Endothelial cell of umbilical vein (primary cell): ENCODE measurements at regions of chr1 and their contacts with region 1.

Region 1: GRCh38 chr1:94481473-94481933 is 60.1 kb downstream of the F3 start:
- DNase-seq: peak; percentile 67
- H3K4me3 ChIP-seq: no peak overlapping the region
- H3K27ac ChIP-seq: no peak overlapping the region
- H3K4me1 ChIP-seq: no peaks in the 10 kb centered on the region
- H3K27me3 ChIP-seq: no peaks in the 10 kb centered on the region
- CTCF ChIP-seq: peak; percentile 83 to 86
- POLR2A ChIP-seq: no peak

Region 2: GRCh38 chr1:94025383-94026340 is 455.8 kb before region 1 on chr1:
- CTCF ChIA-PET with region 1: interaction called, 11 read pairs
- POLR2A ChIA-PET with region 1: no interaction called
- dilution Hi-C with region 1: no loop called
- intact Hi-C with region 1: no loop called
- DNase-seq: peak; percentile 83
- H3K4me3 ChIP-seq: no peak overlapping the region
- H3K27ac ChIP-seq: no peak overlapping the region
- H3K4me1 ChIP-seq: peaks cover 25% of the 10 kb centered on the region
- H3K27me3 ChIP-seq: no peaks in the 10 kb centered on the region
- CTCF ChIP-seq: peak; percentile 53 to 73
- POLR2A ChIP-seq: no peak

Region 3: DNA sequence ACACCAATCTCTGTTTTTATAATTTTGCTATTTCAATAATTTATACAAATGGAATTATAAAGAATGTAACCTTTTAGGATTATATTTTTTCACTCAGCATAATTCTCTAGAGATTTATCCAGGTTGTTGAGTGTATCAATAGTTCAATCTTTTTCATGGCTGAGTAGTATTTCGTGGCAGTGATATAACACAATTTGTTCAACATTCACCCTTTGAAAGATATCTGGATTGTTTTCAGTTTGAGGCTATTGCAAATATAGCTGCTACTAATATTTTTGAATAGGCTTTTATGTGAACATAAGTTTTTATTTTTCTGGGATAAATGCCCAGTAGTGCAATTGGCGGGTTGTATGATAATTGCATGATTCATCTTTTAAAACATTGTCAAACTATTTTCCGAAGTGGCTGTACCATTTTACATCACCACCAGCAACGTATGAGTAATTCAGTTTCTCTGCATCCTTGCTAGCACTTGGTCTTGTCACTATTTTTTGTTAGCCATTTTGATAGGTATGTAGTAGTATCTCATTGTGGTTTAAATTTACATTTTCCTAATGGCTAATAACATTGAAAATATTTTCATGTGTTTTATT is 118.9 kb before region 1 on chr1:
- CTCF ChIA-PET with region 1: no interaction called
- POLR2A ChIA-PET with region 1: no interaction called
- dilution Hi-C with region 1: no loop called
- intact Hi-C with region 1: no loop called
- DNase-seq: no peak
- H3K4me3 ChIP-seq: no peak overlapping the region
- H3K27ac ChIP-seq: no peak overlapping the region
- H3K4me1 ChIP-seq: no peaks in the 10 kb centered on the region
- H3K27me3 ChIP-seq: peaks cover 12 to 15% of the 10 kb centered on the region in 2 experiments
- CTCF ChIP-seq: no peak
- POLR2A ChIP-seq: no peak

Region 4: GRCh38 chr1:94463765-94464330 is 17.7 kb before region 1 on chr1:
- CTCF ChIA-PET with region 1: interaction called, 12 read pairs
- POLR2A ChIA-PET with region 1: no interaction called
- dilution Hi-C with region 1: no loop called
- intact Hi-C with region 1: no loop called
- DNase-seq: peak; percentile 74
- H3K4me3 ChIP-seq: no peak overlapping the region
- H3K27ac ChIP-seq: no peak overlapping the region
- H3K4me1 ChIP-seq: no peaks in the 10 kb centered on the region
- H3K27me3 ChIP-seq: no peaks in the 10 kb centered on the region
- CTCF ChIP-seq: peak in 1 of 2 donors; percentile 47
- POLR2A ChIP-seq: no peak

Region 5: GRCh38 chr1:94471271-94471670 is 10.2 kb before region 1 on chr1:
- CTCF ChIA-PET with region 1: interaction called, 29 read pairs
- POLR2A ChIA-PET with region 1: no interaction called
- dilution Hi-C with region 1: no loop called
- intact Hi-C with region 1: no loop called
- DNase-seq: no peak
- H3K4me3 ChIP-seq: no peak overlapping the region
- H3K27ac ChIP-seq: no peak overlapping the region
- H3K4me1 ChIP-seq: no peaks in the 10 kb centered on the region
- H3K27me3 ChIP-seq: no peaks in the 10 kb centered on the region
- CTCF ChIP-seq: no peak
- POLR2A ChIP-seq: no peak

Region 6: GRCh38 chr1:94501426-94501825 is 19.9 kb after region 1 on chr1:
- CTCF ChIA-PET with region 1: interaction called, 11 read pairs
- POLR2A ChIA-PET with region 1: no interaction called
- dilution Hi-C with region 1: no loop called
- intact Hi-C with region 1: no loop called
- DNase-seq: no peak
- H3K4me3 ChIP-seq: no peak overlapping the region
- H3K27ac ChIP-seq: no peak overlapping the region
- H3K4me1 ChIP-seq: no peaks in the 10 kb centered on the region
- H3K27me3 ChIP-seq: no peaks in the 10 kb centered on the region
- CTCF ChIP-seq: no peak
- POLR2A ChIP-seq: no peak

Region 7: GRCh38 chr1:94514095-94514727 is 32.7 kb after region 1 on chr1:
- CTCF ChIA-PET with region 1: interaction called, 13 read pairs
- POLR2A ChIA-PET with region 1: no interaction called
- dilution Hi-C with region 1: no loop called
- intact Hi-C with region 1: no loop called
- DNase-seq: peak; percentile 46
- H3K4me3 ChIP-seq: no peak overlapping the region
- H3K27ac ChIP-seq: no peak overlapping the region
- H3K4me1 ChIP-seq: no peaks in the 10 kb centered on the region
- H3K27me3 ChIP-seq: no peaks in the 10 kb centered on the region
- CTCF ChIP-seq: peak; percentile 55 to 67
- POLR2A ChIP-seq: no peak

Region 8: GRCh38 chr1:94522304-94522703 is 40.8 kb after region 1 on chr1:
- CTCF ChIA-PET with region 1: interaction called, 6 read pairs
- POLR2A ChIA-PET with region 1: no interaction called
- dilution Hi-C with region 1: no loop called
- intact Hi-C with region 1: loop called (anchors 2 kb)
- DNase-seq: peak; percentile 52
- H3K4me3 ChIP-seq: no peak overlapping the region
- H3K27ac ChIP-seq: no peak overlapping the region
- H3K4me1 ChIP-seq: no peaks in the 10 kb centered on the region
- H3K27me3 ChIP-seq: no peaks in the 10 kb centered on the region
- CTCF ChIP-seq: peak in 1 of 2 donors; percentile 28
- POLR2A ChIP-seq: no peak